Transverse colon (tissue), 4 donors: ENCODE measurements at regions of chr2 and their contacts with region 1.

Region 1: GRCh38 chr2:192357217-192357616 is 162.5 kb upstream of the TMEFF2 start:
- DNase-seq: no peak
- H3K4me3 ChIP-seq: no peak overlapping the region
- H3K27ac ChIP-seq: no peak overlapping the region
- H3K4me1 ChIP-seq: no peaks in the 10 kb centered on the region
- H3K27me3 ChIP-seq: no peaks in the 10 kb centered on the region
- CTCF ChIP-seq: no peak
- EP300 ChIP-seq: no peak
- POLR2A ChIP-seq: no peak

Region 2: GRCh38 chr2:192345287-192345686 is 11.9 kb before region 1 on chr2:
- in situ Hi-C with region 1: no loop called
- intact Hi-C with region 1: loop called (anchors 1 kb)
- DNase-seq: no peak
- H3K4me3 ChIP-seq: no peak overlapping the region
- H3K27ac ChIP-seq: no peak overlapping the region
- H3K4me1 ChIP-seq: no peaks in the 10 kb centered on the region
- H3K27me3 ChIP-seq: no peaks in the 10 kb centered on the region
- CTCF ChIP-seq: no peak
- EP300 ChIP-seq: no peak
- POLR2A ChIP-seq: no peak

Region 3: GRCh38 chr2:192535956-192536685 is 178.9 kb after region 1 on chr2:
- in situ Hi-C with region 1: no loop called
- intact Hi-C with region 1: no loop called
- DNase-seq: no peak
- H3K4me3 ChIP-seq: no peak overlapping the region
- H3K27ac ChIP-seq: no peak overlapping the region
- H3K4me1 ChIP-seq: no peaks in the 10 kb centered on the region
- H3K27me3 ChIP-seq: no peaks in the 10 kb centered on the region
- CTCF ChIP-seq: no peak
- EP300 ChIP-seq: no peak
- POLR2A ChIP-seq: no peak

Region 4: GRCh38 chr2:192675640-192676039 is 318.4 kb after region 1 on chr2:
- in situ Hi-C with region 1: no loop called
- intact Hi-C with region 1: no loop called
- DNase-seq: no peak
- H3K4me3 ChIP-seq: no peak overlapping the region
- H3K27ac ChIP-seq: no peak overlapping the region
- H3K4me1 ChIP-seq: no peaks in the 10 kb centered on the region
- H3K27me3 ChIP-seq: no peaks in the 10 kb centered on the region
- CTCF ChIP-seq: no peak
- EP300 ChIP-seq: no peak
- POLR2A ChIP-seq: no peak